ENCODE measurements at regions of chr10 and their contacts with region 1.

Region 1: GRCh38 chr10:90751107-90751997 is 106.5 kb downstream of the HTR7 start:
- DNase-seq: peak in 8 of 9 donors; percentile 10 to 38 (median 25)
- ATAC-seq: peak; percentile 54
- H3K4me3 ChIP-seq: no peak overlapping the region
- H3K4me3 Mint-ChIP-seq: no peak overlapping the region
- H3K27ac ChIP-seq: no peak overlapping the region
- H3K27ac Mint-ChIP-seq: no peak overlapping the region
- H3K4me1 ChIP-seq: no peaks in the 10 kb centered on the region
- H3K4me1 Mint-ChIP-seq: no peaks in the 10 kb centered on the region
- H3K27me3 ChIP-seq: no peaks in the 10 kb centered on the region
- H3K27me3 Mint-ChIP-seq: peaks cover 38 to 54% (median 48%) of the 10 kb centered on the region in 5 donors

Region 2: GRCh38 chr10:89163265-89163995 is 1587.9 kb before region 1 on chr10:
- CTCF ChIA-PET with region 1: no interaction called
- POLR2A ChIA-PET with region 1: no interaction called
- intact Hi-C with region 1: no loop called
- DNase-seq: peak in 8 of 9 donors; percentile 10 to 57 (median 44)
- ATAC-seq: peak; percentile 88
- H3K4me3 ChIP-seq: peak overlapping the region; percentile 39
- H3K4me3 Mint-ChIP-seq: peak overlapping the region; percentile 26 to 83 (median 80)
- H3K27ac ChIP-seq: no peak overlapping the region
- H3K27ac Mint-ChIP-seq: peak overlapping the region; percentile 40 to 86 (median 74)
- H3K4me1 ChIP-seq: peaks cover 5 to 8% of the 10 kb centered on the region in 2 donors
- H3K4me1 Mint-ChIP-seq: peaks cover 7 to 29% (median 18%) of the 10 kb centered on the region in 7 donors
- H3K27me3 ChIP-seq: no peaks in the 10 kb centered on the region
- H3K27me3 Mint-ChIP-seq: peaks cover 4 to 56% (median 5%) of the 10 kb centered on the region in 5 donors

Region 3: DNA sequence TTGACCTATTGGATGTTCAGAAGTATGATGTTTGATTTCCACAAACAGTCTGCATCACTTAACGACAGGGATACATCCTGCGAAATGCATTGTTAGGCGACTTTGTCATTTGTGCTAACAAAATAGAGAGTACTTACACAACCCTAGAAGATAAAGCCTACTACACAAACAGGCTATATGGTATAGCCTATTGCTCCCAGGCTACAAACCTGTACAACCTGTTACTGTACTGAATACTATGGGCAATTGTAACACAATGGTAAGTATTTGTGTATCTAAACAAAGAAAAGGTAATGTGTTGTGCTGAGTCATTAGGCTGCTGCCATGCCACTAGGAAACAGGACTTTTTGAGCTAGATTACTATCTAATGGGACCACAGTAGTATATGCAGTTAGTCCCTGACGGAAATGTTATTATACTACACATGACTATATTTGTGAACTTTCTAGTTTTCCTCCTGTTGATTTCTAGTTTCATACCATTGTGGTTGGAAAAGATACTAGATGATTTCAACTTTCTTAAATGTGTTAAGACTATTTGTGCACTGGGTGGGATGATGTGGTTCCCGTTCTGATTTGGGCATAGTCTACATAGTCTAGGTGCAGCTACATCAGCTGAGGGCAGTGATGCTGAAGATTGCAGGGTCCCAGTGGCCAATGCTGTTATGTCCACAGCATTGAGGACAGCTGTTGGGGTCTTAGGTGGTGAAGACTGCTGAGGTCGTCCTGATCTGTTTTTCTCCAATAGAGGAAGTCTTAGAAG is 55.3 kb before region 1 on chr10:
- CTCF ChIA-PET with region 1: no interaction called
- POLR2A ChIA-PET with region 1: no interaction called
- intact Hi-C with region 1: no loop called
- DNase-seq: no peak
- ATAC-seq: no peak
- H3K4me3 ChIP-seq: no peak overlapping the region
- H3K4me3 Mint-ChIP-seq: no peak overlapping the region
- H3K27ac ChIP-seq: no peak overlapping the region
- H3K27ac Mint-ChIP-seq: no peak overlapping the region
- H3K4me1 ChIP-seq: no peaks in the 10 kb centered on the region
- H3K4me1 Mint-ChIP-seq: no peaks in the 10 kb centered on the region
- H3K27me3 ChIP-seq: no peaks in the 10 kb centered on the region
- H3K27me3 Mint-ChIP-seq: peaks cover 0 to 23% (median 12%) of the 10 kb centered on the region in 5 donors

Region 4: GRCh38 chr10:90738885-90739284 is 12.5 kb before region 1 on chr10:
- CTCF ChIA-PET with region 1: no interaction called
- POLR2A ChIA-PET with region 1: no interaction called
- intact Hi-C with region 1: no loop called
- DNase-seq: no peak
- ATAC-seq: no peak
- H3K4me3 ChIP-seq: no peak overlapping the region
- H3K4me3 Mint-ChIP-seq: no peak overlapping the region
- H3K27ac ChIP-seq: no peak overlapping the region
- H3K27ac Mint-ChIP-seq: no peak overlapping the region
- H3K4me1 ChIP-seq: no peaks in the 10 kb centered on the region
- H3K4me1 Mint-ChIP-seq: no peaks in the 10 kb centered on the region
- H3K27me3 ChIP-seq: no peaks in the 10 kb centered on the region
- H3K27me3 Mint-ChIP-seq: peaks cover 15 to 37% (median 22%) of the 10 kb centered on the region in 5 donors

Region 5: DNA sequence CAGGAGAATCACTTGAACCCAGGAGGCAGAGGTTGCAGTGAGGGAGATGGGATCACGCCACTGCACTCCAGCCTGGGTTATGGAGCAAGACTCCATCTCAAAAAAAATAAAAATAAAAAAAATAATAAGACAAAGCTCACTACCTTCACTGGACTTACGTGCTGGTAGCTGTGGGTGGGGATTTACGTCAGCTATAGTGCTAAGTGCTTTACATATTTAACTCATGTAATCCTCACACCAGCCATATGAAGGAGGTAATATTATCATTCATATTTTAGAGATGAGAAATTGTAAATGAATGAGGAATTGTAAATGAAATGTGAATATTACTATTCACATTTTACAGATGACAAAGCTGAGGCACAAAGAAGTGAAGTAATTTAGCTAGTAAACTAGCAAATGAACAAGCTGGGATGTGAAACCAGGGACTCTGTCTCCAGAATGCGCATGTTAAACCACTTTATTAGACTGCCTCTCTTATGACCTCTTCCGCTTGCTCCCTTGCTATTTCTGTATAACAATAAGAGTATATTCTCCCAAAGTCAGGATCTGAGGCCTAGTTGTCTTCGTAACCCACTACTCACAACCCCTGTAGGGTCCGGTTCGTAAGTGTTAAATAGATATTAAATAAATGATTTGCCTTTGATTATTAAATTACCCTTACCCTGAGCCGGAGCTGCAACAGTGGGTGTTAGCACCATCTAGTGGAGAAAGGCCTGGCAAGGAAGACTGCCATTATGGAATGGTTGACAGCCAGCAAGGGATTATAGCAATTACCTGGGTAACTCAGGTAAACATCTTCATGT is 36.2 kb after region 1 on chr10:
- CTCF ChIA-PET with region 1: no interaction called
- POLR2A ChIA-PET with region 1: no interaction called
- intact Hi-C with region 1: loop called in 1 of 2 experiments (anchors 2 kb)
- DNase-seq: peak in 5 of 9 donors; percentile 2 to 24 (median 15)
- ATAC-seq: peak; percentile 37
- H3K4me3 ChIP-seq: no peak overlapping the region
- H3K4me3 Mint-ChIP-seq: no peak overlapping the region
- H3K27ac ChIP-seq: no peak overlapping the region
- H3K27ac Mint-ChIP-seq: no peak overlapping the region
- H3K4me1 ChIP-seq: no peaks in the 10 kb centered on the region
- H3K4me1 Mint-ChIP-seq: peaks cover 0 to 3% (median 0%) of the 10 kb centered on the region in 7 donors
- H3K27me3 ChIP-seq: no peaks in the 10 kb centered on the region
- H3K27me3 Mint-ChIP-seq: peaks cover under 1 to 15% (median 9%) of the 10 kb centered on the region in 5 donors

Region 6: DNA sequence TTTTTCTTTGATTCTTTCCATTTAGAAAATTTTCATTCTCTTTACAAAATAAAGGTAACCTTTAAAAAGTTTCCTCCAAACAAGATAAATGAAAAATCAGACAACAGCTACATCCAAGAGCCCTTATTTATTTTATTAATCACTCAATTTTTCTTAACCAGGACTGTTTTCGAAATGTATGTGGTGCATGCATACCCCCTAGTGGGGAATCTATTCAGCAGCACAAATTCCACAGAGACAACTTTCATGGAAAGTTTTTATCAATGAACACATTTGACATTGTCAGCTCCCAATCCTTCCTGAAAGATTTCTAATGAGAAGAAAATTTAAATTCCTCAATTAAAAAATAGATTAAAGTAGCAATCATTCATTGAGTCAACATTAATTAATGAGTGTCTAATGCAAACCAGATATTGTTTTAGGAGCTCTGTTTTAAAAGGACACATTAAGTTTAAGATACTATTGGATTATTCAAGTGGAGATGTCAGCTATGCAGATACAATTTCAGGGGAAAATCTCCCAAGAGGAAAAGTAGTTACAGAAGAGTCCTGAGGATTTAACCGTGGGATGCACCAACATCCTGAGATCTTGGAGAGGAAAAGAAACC is 111.7 kb after region 1 on chr10:
- CTCF ChIA-PET with region 1: interaction called, 3 read pairs
- POLR2A ChIA-PET with region 1: no interaction called
- intact Hi-C with region 1: loop called (anchors 1 kb)
- DNase-seq: peak in 3 of 9 donors; percentile 7 to 28 (median 27)
- ATAC-seq: no peak
- H3K4me3 ChIP-seq: no peak overlapping the region
- H3K4me3 Mint-ChIP-seq: no peak overlapping the region
- H3K27ac ChIP-seq: no peak overlapping the region
- H3K27ac Mint-ChIP-seq: no peak overlapping the region
- H3K4me1 ChIP-seq: no peaks in the 10 kb centered on the region
- H3K4me1 Mint-ChIP-seq: peaks cover 0 to 9% (median 4%) of the 10 kb centered on the region in 7 donors
- H3K27me3 ChIP-seq: no peaks in the 10 kb centered on the region
- H3K27me3 Mint-ChIP-seq: peaks cover 28 to 89% (median 59%) of the 10 kb centered on the region in 5 donors